ENCODE measurements at regions of chr10 and their contacts with region 1.

Region 1: DNA sequence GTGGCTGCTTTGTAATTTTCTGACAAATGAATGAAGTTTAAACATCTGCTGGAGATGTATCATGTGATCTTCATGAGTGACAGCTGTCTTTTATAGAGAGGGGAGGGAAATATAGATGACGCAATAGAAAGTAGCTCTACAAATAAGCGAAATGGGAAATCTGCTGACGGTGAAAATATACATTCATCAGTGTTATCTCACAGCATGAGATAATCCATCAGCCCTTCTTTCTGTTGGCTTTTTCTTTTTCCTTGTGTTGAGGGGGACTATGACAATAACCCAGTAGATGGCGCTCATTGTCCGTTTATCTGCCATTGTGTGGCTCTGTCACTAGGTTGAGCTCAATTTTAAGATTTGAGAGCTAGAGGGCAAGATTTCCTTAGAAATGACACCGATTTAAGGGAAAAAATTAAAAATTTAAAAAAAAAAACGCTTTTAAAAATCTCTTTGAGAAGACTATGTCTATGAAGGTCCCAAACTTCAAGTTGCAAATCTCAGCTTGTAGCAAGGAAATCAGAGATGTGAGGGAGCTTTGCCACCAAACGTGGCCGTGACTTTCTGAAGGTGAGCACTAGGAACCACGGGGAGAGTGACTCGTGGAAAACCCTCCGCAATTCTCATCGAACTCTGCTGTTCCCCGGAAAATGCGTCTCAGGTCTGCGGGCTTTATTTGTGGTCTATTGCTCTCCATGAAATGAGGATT is 114.6 kb upstream of the SFMBT2 start:
- DNase-seq: peak; percentile 71

Region 2: DNA sequence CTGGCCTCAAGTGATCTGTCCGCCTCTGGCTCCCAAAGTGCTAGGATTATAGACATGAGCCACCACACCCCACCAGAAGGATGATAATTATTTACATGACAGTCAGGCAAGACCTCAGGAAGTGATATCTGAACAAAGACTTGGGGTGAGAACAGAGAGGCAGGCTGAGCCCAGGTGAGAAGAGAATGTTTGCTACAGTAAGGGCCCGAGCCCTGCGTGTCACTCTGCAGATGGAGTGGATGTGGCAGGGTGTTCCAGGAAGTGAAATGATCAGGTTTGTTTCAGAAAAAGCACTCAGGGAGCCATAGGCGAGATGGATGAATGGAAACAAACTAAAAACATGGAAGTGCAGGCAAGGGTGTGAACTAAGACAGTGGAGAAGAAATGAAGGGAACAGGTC is 136.9 kb before region 1 on chr10:
- CTCF ChIA-PET with region 1: no interaction called
- POLR2A ChIA-PET with region 1: no interaction called
- DNase-seq: no peak

Region 3: DNA sequence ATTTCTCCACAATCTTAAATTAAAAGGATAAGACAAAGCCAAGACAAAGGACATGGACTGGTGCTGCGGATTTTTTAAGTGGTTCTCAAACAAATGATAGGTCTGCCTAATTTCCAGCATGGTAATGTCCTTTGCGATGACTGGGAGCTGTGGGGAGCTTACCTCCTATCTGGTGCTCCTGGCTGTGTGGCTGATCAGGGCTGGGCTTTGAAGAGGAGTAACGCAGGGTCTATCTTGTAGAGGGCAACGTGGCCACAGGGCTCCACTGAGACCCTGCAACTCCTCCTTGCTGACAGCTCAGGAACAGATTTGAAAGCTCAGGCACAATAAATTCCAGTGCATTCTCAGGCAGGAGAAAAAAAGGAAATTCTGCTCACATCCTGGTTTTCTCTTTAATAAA is 11.5 kb before region 1 on chr10:
- CTCF ChIA-PET with region 1: interaction called, 10 read pairs
- POLR2A ChIA-PET with region 1: no interaction called
- DNase-seq: no peak

Region 4: DNA sequence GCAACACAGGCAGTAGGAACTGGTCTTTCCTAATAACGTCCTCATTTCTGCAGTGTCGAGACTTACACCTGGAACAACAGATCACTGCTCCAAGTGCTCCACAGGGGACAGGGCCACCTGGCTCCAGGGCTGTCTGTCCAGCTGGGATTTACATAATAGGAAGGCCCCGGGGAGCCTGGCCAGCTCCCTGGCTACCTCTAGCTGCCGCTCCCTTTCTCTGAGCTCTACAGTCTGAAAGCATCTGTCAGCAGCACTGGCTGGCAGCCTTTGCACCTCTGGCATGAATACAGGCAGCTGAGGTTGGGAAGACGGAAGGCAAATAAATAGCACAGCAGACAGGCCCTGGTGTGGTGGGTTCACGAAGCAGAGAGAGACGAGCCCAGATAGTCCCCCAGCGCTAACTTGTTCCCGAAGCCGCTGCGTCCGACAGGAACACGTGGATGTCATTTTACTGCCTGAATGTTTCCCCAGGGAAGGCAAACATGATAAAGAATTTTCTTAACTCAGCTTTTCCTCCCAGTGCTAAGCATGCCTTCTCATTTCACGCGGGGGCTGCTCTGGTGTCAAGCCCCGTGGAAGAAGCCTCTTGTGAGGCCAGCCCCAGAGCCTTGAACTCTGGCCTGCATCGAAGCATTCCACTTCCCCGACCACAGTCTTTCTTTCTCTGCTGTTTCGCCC is 35.9 kb after region 1 on chr10:
- CTCF ChIA-PET with region 1: no interaction called
- POLR2A ChIA-PET with region 1: no interaction called
- DNase-seq: no peak

Region 5: GRCh38 chr10:7687228-7687907 is 161.9 kb after region 1 on chr10:
- CTCF ChIA-PET with region 1: interaction called, 31 read pairs
- POLR2A ChIA-PET with region 1: no interaction called
- DNase-seq: peak; percentile 85

Measured in HEK293T (cell line).